Activated T-helper 2 cell treated with anti-CD3 and anti-CD28 coated beads, Interferon-gamma antibody, Interleukin-2, Interleukin-4, amounts not matched to agents 10 μg/mL and 5 μg/mL and 100 μg/mL, durations not matched to agents 14 hours and 24 hours and 36 hours (primary cell): ENCODE measurements at regions of chr11 and their contacts with region 1.

Region 1: DNA sequence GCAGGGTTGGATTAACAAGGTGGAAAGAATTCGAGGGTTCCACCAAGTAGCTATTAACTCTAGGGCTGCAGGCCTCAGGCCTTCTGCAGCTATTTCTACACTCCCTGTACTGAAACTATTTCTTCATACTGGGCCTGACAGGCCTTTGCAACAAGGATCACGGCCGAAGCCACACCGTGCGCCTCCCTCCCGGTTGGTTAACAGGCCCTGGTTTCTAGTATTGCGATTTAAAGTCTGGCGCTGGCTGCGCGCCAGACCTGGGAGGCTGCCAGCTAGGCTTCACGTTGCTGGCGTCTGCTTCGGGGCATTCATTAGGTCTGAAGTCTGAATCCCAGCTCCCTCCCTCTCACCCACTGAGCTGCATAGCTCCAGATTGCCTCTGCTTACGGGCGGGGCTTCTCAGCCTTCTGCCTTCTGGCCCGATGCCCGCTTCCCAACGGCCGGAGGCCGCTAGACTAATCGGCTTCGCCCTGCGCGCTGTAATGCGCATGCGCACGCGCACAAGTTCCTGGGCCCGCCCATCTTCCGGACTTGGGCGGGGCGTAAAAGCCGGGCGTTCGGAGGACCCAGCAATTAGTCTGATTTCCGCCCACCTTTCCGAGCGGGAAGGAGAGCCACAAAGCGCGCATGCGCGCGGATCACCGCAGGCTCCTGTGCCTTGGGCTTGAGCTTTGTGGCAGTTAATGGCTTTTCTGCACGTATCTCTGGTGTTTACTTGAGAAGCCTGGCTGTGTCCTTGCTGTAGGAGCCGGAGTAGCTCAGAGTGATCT is 1.6 kb downstream of the LDHA start:
- DNase-seq: peak; percentile 97
- H3K4me3 Mint-ChIP-seq: peak overlapping the region; percentile 97
- H3K27ac Mint-ChIP-seq: peak overlapping the region; percentile 95
- H3K4me1 Mint-ChIP-seq: peaks cover 45% of the 10 kb centered on the region
- H3K27me3 Mint-ChIP-seq: no peaks in the 10 kb centered on the region

Region 2: DNA sequence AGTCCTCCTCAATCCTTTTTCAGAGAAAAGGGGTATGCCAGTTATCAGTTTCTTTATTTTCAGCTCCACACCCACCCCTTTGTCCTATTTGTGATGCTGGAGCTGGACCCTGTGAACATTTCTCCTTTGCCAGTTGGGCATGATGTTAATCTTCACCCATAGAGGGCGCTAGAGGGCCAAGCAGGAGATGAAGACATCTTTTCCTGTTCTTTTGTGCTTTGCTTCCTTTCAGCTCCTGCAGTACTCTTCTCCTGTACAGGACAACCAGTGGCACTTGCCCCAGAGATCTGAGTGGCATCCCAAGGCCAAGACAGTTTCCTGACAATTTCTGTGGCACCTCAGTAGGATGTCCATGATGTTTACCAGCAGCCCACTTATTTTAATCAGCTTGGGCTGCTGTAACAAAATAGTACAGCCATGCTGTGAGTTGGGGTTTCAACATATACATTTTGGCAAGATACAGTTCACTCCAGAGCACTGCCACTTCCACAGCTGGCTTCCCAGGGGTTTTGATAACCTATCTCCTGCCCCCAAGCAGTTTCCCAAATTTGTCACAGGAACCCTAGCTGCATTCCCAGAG is 152.0 kb before region 1 on chr11:
- intact Hi-C with region 1: loop called (anchors 5 kb)
- DNase-seq: peak; percentile 63
- H3K4me3 Mint-ChIP-seq: no peak overlapping the region
- H3K27ac Mint-ChIP-seq: peak overlapping the region; percentile 54
- H3K4me1 Mint-ChIP-seq: peaks cover 25% of the 10 kb centered on the region
- H3K27me3 Mint-ChIP-seq: peaks cover 34% of the 10 kb centered on the region

Region 3: GRCh38 chr11:18408558-18409242 is 12.8 kb after region 1 on chr11:
- intact Hi-C with region 1: loop called (anchors 2 kb)
- DNase-seq: no peak
- H3K4me3 Mint-ChIP-seq: no peak overlapping the region
- H3K27ac Mint-ChIP-seq: peak overlapping the region; percentile 35
- H3K4me1 Mint-ChIP-seq: peaks cover 11% of the 10 kb centered on the region
- H3K27me3 Mint-ChIP-seq: no peaks in the 10 kb centered on the region

Region 4: DNA sequence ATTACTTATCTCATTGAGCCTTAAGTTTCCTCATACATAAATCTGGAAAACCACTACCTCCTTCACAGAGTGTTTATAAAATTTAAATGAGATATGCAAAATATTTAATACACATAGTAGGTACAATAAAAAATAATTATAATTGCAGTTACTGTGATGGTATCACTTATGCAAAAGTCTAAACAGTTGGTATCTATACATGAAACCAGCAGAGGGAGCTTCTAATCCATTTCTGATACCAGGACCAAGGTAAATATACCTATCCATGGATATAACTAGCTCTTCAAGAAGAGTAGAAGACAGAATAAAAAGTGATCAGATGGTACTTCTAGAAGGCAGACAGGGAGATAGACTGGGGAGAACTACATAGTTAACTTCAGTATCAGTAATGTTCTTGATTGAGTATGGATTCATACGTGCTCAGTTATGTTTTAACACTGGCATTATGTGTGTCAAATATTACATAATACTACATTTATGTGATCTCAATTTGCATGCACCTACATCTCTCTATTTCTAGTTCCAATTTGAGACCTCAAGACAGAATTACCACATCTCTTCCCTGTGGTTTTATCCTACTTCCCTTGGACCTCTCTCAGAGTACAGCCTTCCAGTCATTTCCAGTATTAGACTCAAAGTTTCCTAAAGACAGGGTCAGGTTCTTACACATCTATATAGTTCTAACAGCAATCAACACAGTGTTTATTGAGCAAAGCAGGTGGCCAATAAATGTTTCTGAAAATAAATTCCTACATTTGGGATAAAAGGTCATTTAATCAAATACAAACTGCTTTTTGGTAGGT is 144.5 kb after region 1 on chr11:
- intact Hi-C with region 1: no loop called
- DNase-seq: no peak
- H3K4me3 Mint-ChIP-seq: no peak overlapping the region
- H3K27ac Mint-ChIP-seq: no peak overlapping the region
- H3K4me1 Mint-ChIP-seq: peaks cover 6% of the 10 kb centered on the region
- H3K27me3 Mint-ChIP-seq: no peaks in the 10 kb centered on the region